ENCODE measurements at regions of chr15 and their contacts with region 1.

Region 1: DNA sequence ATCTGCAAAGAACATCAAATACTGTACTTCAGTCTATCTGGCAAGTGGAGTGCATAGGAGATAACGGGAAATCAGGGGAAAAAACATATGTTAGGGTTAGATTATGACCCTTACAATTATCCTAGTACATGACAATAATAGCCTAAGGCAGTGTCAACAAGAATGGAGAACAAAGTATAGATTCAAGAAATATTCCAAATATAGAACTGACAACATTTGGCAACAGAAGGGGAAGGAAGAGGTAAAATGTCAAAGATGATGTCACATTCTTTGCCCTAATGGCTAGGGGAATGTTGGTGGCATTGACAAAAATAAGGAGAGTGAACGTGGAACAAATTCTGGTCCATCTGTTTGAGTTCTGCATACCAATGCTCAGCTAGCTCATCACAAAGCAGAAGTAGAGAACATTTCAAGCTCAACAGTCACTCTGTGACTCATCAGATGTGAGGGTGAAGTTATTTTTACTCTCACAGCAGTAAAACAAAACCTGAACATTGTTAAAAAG is 15.5 kb upstream of the ATP8B4 start:
- DNase-seq: no peak
- H3K4me3 Mint-ChIP-seq: peak overlapping the region; percentile 41
- H3K27ac Mint-ChIP-seq: peak overlapping the region; percentile 91
- H3K4me1 Mint-ChIP-seq: peaks cover 61% of the 10 kb centered on the region
- H3K27me3 Mint-ChIP-seq: no peaks in the 10 kb centered on the region

Region 2: DNA sequence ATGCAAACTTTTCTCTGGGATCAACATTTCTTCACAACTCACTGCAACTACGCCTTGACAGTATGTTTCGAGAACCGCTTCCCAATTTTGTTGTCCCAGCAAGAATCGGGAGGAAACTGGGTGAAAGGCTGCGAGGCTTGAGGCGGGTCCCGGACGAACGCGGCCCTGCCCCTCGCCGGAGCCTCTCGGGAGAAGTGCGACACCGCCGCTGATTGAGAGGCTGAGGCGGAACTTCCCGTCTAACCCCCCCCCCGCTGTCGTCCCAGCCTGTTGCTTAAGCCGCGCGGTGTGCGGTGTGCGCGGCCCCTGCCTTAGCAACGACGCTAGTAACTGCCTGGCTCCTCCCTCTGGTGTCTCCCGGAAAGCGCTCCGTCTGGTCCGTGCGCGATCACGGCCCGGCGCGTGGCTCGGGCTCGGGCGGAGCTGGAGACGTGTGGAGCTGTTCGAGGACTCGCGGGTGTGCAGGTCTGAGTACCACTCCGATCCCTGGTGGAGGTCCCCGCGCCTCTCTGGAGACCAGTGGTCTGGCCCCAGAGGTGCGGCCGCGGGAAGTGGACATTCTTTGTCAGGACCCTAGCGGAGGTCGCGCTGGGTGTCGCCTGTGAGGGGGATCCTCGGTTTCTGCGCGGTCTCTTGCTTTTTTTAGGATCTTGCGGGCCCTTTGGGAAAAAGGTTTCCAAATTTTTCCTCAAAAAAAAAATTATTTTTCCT is 513.8 kb before region 1 on chr15 and contains the starts of genes DTWD1 and FAM227B:
- intact Hi-C with region 1: loop called (anchors 2 kb)
- DNase-seq: peak; percentile 93
- H3K4me3 Mint-ChIP-seq: peak within 1 kb of the TSS; percentile 90
- H3K27ac Mint-ChIP-seq: peak within 1 kb of the TSS; percentile 91
- H3K4me1 Mint-ChIP-seq: peaks cover 39% of the 10 kb centered on the region
- H3K27me3 Mint-ChIP-seq: no peaks in the 10 kb centered on the region
- total RNA-seq, gene DTWD1: 22.0 and 24.0 TPM in 2 replicates
- total RNA-seq, gene FAM227B: 2.7 and 3.1 TPM in 2 replicates

Region 3: DNA sequence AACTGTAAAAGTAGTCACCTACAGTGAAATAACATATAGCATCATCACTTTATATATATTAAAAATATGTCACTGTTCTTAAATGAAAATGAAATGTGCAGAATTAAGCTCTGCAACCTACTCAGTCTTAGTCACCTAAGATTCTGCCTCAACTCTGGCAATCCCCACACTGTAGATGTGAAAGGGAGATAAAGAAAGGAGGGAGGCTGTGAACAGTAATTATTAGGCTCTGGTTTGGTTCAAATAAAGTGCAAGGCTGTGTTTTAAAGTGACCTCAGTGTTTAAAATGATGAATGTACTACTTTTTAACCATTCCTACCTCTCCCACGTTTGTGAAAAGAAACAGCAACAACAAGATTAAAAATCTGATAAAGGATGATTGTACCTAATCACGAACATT is 87.7 kb before region 1 on chr15:
- intact Hi-C with region 1: loop called (anchors 1 kb)
- DNase-seq: no peak
- H3K4me3 Mint-ChIP-seq: no peak overlapping the region
- H3K27ac Mint-ChIP-seq: peak overlapping the region; percentile 79
- H3K4me1 Mint-ChIP-seq: peaks cover 40% of the 10 kb centered on the region
- H3K27me3 Mint-ChIP-seq: no peaks in the 10 kb centered on the region

Region 4: GRCh38 chr15:50107591-50108408 is 26.8 kb before region 1 on chr15:
- intact Hi-C with region 1: loop called (anchors 1 kb)
- DNase-seq: peak; percentile 29
- H3K4me3 Mint-ChIP-seq: peak overlapping the region; percentile 61
- H3K27ac Mint-ChIP-seq: peak overlapping the region; percentile 94
- H3K4me1 Mint-ChIP-seq: peaks cover 83% of the 10 kb centered on the region
- H3K27me3 Mint-ChIP-seq: no peaks in the 10 kb centered on the region

Region 5: DNA sequence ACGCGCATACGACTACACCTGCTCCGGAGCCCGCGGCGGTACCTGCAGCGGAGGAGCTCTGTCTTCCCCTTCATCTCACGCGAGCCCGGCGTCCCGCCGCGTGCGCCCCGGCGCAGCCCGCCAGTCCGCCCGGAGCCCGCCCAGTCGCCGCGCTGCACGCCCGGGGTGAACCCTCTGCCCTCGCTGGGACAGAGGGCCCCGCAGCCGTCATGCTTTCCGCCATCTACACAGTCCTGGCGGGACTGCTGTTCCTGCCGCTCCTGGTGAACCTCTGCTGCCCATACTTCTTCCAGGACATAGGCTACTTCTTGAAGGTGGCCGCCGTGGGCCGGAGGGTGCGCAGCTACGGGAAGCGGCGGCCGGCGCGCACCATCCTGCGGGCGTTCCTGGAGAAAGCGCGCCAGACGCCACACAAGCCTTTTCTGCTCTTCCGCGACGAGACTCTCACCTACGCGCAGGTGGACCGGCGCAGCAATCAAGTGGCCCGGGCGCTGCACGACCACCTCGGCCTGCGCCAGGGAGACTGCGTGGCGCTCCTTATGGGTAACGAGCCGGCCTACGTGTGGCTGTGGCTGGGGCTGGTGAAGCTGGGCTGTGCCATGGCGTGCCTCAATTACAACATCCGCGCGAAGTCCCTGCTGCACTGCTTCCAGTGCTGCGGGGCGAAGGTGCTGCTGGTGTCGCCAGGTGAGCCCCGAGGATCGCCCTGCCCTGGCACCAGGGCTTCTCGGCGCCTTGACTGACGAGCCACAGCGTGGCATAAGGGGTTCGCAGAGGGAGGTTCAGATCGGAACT is 47.8 kb after region 1 on chr15:
- intact Hi-C with region 1: loop called (anchors 2 kb)
- DNase-seq: peak; percentile 53
- H3K4me3 Mint-ChIP-seq: peak overlapping the region; percentile 98
- H3K27ac Mint-ChIP-seq: peak overlapping the region; percentile 96
- H3K4me1 Mint-ChIP-seq: peaks cover 44% of the 10 kb centered on the region
- H3K27me3 Mint-ChIP-seq: no peaks in the 10 kb centered on the region

Region 6: DNA sequence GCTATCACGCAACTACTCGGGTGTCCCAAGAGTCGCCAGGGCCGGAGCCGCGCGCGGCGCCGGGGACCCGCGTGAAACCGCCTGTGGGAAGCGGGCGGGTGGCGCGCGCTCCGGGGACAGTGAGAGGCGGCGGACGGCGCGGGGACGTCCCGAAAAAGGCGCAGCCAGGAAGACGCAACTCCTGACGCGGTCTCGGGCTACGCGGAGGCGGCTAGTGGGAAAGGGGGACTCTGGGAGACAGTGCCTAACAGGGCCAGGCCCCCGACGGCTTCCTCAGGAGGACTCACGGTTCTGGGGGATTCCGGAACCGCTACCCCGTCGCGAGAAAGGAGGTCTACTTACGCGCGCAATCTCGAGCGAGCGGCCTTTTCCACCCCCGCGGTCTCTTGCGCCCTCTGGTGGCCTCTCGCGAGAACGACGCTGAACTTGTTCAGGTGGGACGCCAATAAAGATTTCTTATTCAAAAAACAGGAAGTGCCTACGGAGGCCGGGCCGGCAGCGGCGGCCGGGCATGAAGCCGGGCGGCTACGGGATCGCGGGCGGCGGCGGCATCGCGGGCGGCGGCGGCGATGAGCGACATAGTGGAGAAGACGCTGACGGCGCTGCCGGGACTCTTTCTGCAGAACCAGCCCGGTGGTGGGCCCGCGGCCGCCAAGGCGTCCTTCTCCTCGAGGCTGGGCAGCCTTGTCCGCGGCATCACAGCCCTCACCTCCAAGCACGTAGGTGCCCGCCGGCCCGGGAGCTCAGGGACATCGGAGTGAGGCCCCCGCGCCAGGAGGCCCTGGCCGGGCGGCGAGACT is 773.8 kb after region 1 on chr15 and contains the start of gene AP4E1:
- intact Hi-C with region 1: loop called (anchors 5 kb)
- DNase-seq: peak; percentile 93
- H3K4me3 Mint-ChIP-seq: peak within 1 kb of the TSS; percentile 97
- H3K27ac Mint-ChIP-seq: peak within 1 kb of the TSS; percentile 99
- H3K4me1 Mint-ChIP-seq: peaks cover 14% of the 10 kb centered on the region
- H3K27me3 Mint-ChIP-seq: no peaks in the 10 kb centered on the region
- total RNA-seq, gene AP4E1: 16.7 and 17.9 TPM in 2 replicates